Ascending aorta (tissue), 2 donors: ENCODE measurements at regions of chr3 and their contacts with region 1.

Region 1: GRCh38 chr3:43870120-43870519 is 179.4 kb downstream of the ABHD5 start:
- DNase-seq: peak in 1 of 2 donors; percentile 78
- H3K4me3 ChIP-seq: no peak overlapping the region
- H3K27ac ChIP-seq: peak overlapping the region; percentile 79 to 85
- H3K4me1 ChIP-seq: peaks cover 11 to 37% of the 10 kb centered on the region in 2 donors
- H3K27me3 ChIP-seq: no peaks in the 10 kb centered on the region
- CTCF ChIP-seq: no peak

Region 2: DNA sequence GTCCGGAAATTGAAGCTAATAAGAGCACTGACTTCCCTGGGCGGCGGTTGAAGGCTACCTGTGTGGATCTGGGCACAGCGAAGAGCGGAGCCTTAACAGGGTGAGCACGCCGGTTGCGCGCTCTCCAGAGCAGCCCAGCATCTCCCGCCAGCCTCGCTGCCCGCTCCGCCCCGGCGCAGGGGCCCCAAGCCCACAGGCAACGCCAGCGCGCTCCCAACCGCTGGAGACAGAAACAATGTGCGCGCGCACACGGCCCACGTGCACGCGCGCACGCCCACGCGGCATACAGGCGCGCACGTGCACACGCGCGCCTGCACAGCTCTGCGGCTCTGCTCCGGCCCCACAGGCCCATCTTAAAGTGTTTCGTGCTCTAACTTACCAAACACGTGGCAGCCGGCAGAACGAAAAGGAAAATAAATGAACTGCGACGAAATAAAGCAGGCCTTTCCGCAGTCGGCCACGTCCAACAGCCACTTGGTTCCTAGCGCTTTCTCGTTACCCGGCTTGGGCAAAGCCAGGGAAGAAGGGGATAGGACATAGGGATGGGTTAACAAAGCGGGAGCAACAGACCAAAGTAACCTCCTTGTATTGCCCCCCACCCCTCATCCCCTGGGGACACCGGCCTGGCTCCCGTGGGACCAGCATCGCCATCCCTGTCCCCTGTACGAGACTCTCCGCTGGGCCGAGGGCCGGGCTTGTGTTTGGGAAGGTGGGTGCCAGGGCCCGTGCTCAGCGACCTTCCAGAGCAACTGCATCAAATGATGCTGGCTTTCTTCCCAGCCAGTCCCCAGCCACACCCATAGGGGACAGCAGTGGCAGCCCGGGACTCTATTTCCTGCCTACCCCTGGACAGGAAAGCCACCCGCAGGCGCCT is 24.3 kb after region 1 on chr3:
- intact Hi-C with region 1: loop called (anchors 2 kb)
- DNase-seq: peak in 1 of 2 donors; percentile 80
- H3K4me3 ChIP-seq: peak overlapping the region; percentile 47 to 64
- H3K27ac ChIP-seq: peak overlapping the region; percentile 54 to 74
- H3K4me1 ChIP-seq: no peaks in the 10 kb centered on the region
- H3K27me3 ChIP-seq: no peaks in the 10 kb centered on the region
- CTCF ChIP-seq: no peak

Region 3: GRCh38 chr3:43978708-43979107 is 108.6 kb after region 1 on chr3:
- intact Hi-C with region 1: no loop called
- DNase-seq: no peak
- H3K4me3 ChIP-seq: no peak overlapping the region
- H3K27ac ChIP-seq: no peak overlapping the region
- H3K4me1 ChIP-seq: no peaks in the 10 kb centered on the region
- H3K27me3 ChIP-seq: no peaks in the 10 kb centered on the region
- CTCF ChIP-seq: no peak

Region 4: GRCh38 chr3:44065311-44066094 is 195.4 kb after region 1 on chr3:
- intact Hi-C with region 1: loop called (anchors 10 kb)
- DNase-seq: no peak
- H3K4me3 ChIP-seq: no peak overlapping the region
- H3K27ac ChIP-seq: no peak overlapping the region
- H3K4me1 ChIP-seq: peaks cover 0 to 4% of the 10 kb centered on the region in 2 donors
- H3K27me3 ChIP-seq: no peaks in the 10 kb centered on the region
- CTCF ChIP-seq: no peak